Natural killer cell (primary cell): ENCODE measurements at regions of chr10 and their contacts with region 1.

Region 1: GRCh38 chr10:22714479-22715289 is at the start of gene PIP4K2A:
- DNase-seq: peak; percentile 79 to 91
- ATAC-seq: peak; percentile 78 to 91 (median 88)
- H3K4me3 ChIP-seq: peak within 1 kb of the TSS; percentile 98
- H3K4me3 Mint-ChIP-seq: peak within 1 kb of the TSS; percentile 94
- H3K27ac ChIP-seq: peak within 1 kb of the TSS; percentile 94
- H3K27ac Mint-ChIP-seq: peak within 1 kb of the TSS; percentile 82 to 87
- H3K4me1 ChIP-seq: peaks cover 14% of the 10 kb centered on the region
- H3K4me1 Mint-ChIP-seq: peaks cover 34 to 35% of the 10 kb centered on the region in 2 donors
- H3K27me3 ChIP-seq: no peaks in the 10 kb centered on the region
- H3K27me3 Mint-ChIP-seq: no peaks in the 10 kb centered on the region
- CTCF ChIP-seq: no peak
- total RNA-seq, gene PIP4K2A: 311 to 423 (median 405) TPM

Region 2: GRCh38 chr10:21336476-21337170 is 1378.1 kb before region 1 on chr10:
- intact Hi-C with region 1: no loop called
- DNase-seq: no peak
- ATAC-seq: no peak
- H3K4me3 ChIP-seq: no peak overlapping the region
- H3K4me3 Mint-ChIP-seq: no peak overlapping the region
- H3K27ac ChIP-seq: no peak overlapping the region
- H3K27ac Mint-ChIP-seq: no peak overlapping the region
- H3K4me1 ChIP-seq: no peaks in the 10 kb centered on the region
- H3K4me1 Mint-ChIP-seq: no peaks in the 10 kb centered on the region
- H3K27me3 ChIP-seq: no peaks in the 10 kb centered on the region
- H3K27me3 Mint-ChIP-seq: no peaks in the 10 kb centered on the region
- CTCF ChIP-seq: no peak

Region 3: GRCh38 chr10:22325272-22326144 is 389.2 kb before region 1 on chr10:
- intact Hi-C with region 1: loop called (anchors 10 kb)
- DNase-seq: peak; percentile 69 to 93
- ATAC-seq: peak; percentile 42 to 61 (median 60)
- H3K4me3 ChIP-seq: peak overlapping the region; percentile 49
- H3K4me3 Mint-ChIP-seq: peak overlapping the region; percentile 91
- H3K27ac ChIP-seq: peak overlapping the region; percentile 47
- H3K27ac Mint-ChIP-seq: peak overlapping the region; percentile 68 to 77
- H3K4me1 ChIP-seq: peaks cover 20% of the 10 kb centered on the region
- H3K4me1 Mint-ChIP-seq: peaks cover 35 to 43% of the 10 kb centered on the region in 2 donors
- H3K27me3 ChIP-seq: peaks cover 27% of the 10 kb centered on the region
- H3K27me3 Mint-ChIP-seq: peaks cover 13 to 30% of the 10 kb centered on the region in 2 donors
- CTCF ChIP-seq: no peak

Region 4: DNA sequence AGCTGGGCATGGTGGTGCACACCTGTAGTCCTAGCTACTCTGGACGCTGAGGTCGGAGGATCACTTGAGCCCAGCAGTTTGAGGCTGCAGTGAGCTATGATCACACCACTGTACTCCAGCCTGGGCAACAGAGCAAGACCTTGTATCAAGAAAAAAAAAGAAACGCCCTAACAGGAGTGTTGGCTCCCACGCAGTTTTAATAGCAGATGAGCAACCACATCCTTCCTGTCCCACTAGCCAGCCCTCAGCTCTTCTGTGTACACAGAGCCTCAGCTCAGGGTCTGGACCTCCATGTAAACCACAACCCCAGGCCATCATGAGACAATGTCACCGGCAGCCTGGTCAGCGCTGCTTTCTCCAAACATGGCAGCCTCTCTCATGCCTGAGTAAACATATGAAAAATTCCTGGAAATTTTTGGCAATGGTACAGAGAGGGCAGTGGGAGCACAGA is 108.5 kb before region 1 on chr10:
- intact Hi-C with region 1: loop called (anchors 5 kb)
- DNase-seq: peak; percentile 58 to 80
- ATAC-seq: peak; percentile 71 to 89 (median 86)
- H3K4me3 ChIP-seq: peak overlapping the region; percentile 1
- H3K4me3 Mint-ChIP-seq: peak overlapping the region; percentile 74
- H3K27ac ChIP-seq: peak overlapping the region; percentile 79
- H3K27ac Mint-ChIP-seq: peak overlapping the region; percentile 99
- H3K4me1 ChIP-seq: peaks cover 75% of the 10 kb centered on the region
- H3K4me1 Mint-ChIP-seq: peaks cover 87 to 97% of the 10 kb centered on the region in 2 donors
- H3K27me3 ChIP-seq: no peaks in the 10 kb centered on the region
- H3K27me3 Mint-ChIP-seq: no peaks in the 10 kb centered on the region
- CTCF ChIP-seq: no peak

Region 5: DNA sequence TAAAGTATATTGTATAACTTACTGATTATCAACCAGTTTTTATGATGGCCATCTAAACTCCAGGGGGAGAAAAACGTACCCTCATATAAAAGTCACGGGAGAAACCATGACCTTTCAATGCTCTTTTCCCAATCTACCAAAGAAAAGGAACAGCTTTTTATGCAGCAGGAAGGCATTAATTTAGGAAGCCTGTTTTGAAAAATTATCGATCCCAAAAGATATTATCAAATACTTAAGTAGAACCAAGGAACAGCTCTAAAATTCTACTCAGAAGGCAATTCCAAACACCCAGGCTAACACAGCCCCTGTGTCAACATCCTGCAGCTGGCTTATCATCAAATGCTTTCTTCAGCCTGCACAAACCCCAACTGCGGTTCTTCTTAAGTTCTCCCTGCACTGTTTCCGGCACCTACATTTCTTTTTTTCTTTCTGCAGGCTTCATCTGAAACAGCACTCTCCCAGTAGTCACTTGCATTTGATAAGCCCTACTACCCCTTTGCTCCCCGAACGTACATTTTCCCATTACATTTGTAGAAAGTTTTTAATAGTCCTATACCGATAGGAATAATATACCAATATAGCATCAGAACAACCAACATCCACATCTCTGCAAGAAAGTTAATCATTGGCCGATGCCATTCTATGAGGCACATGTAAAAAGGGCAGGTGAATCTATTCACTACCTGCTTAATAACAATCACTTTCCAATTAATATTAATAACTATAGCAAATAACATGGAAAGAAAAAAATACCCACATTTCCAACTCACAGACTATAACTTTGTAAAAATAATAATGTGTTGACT is 48.2 kb before region 1 on chr10:
- intact Hi-C with region 1: loop called (anchors 5 kb)
- DNase-seq: peak in 1 of 2 donors; percentile 91
- ATAC-seq: peak; percentile 78 to 89 (median 89)
- H3K4me3 ChIP-seq: peak overlapping the region; percentile 2
- H3K4me3 Mint-ChIP-seq: peak overlapping the region; percentile 87
- H3K27ac ChIP-seq: peak overlapping the region; percentile 38
- H3K27ac Mint-ChIP-seq: peak overlapping the region; percentile 81 to 99
- H3K4me1 ChIP-seq: peaks cover 35% of the 10 kb centered on the region
- H3K4me1 Mint-ChIP-seq: peaks cover 69 to 83% of the 10 kb centered on the region in 2 donors
- H3K27me3 ChIP-seq: no peaks in the 10 kb centered on the region
- H3K27me3 Mint-ChIP-seq: no peaks in the 10 kb centered on the region
- CTCF ChIP-seq: no peak

Region 6: DNA sequence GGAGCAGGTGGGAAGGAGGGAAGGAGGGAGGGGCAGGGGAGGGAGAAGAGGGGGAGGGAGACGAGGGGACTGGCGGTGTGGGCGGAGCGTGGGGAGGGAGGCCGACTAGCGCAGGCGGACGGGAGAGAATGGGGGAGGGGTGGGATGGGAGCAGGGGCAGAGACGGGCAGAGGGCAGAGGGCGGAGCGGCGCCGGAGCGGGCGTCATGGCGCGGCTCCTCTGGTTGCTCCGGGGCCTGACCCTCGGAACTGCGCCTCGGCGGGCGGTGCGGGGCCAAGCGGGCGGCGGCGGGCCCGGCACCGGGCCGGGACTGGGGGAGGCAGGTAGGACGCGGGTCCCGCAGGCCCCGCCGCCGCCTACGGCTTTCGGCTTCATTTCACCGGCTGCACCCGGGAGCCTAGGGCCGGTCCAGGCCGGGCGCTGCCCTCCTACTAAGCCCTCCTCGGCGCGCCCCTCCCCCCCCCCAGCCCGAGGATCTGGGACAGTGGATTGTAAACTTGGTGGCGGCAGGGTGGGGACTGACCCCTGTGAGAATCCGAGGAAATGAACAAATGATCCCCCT is 380.8 kb after region 1 on chr10 and contains the start of gene MSRB2:
- intact Hi-C with region 1: no loop called
- DNase-seq: peak; percentile 49 to 92
- ATAC-seq: peak; percentile 77 to 83 (median 79)
- H3K4me3 ChIP-seq: peak within 1 kb of the TSS; percentile 72
- H3K4me3 Mint-ChIP-seq: peak within 1 kb of the TSS; percentile 87
- H3K27ac ChIP-seq: peak within 1 kb of the TSS; percentile 69
- H3K27ac Mint-ChIP-seq: peak within 1 kb of the TSS; percentile 55 to 91
- H3K4me1 ChIP-seq: peaks cover 13% of the 10 kb centered on the region
- H3K4me1 Mint-ChIP-seq: peaks cover 16 to 34% of the 10 kb centered on the region in 2 donors
- H3K27me3 ChIP-seq: no peaks in the 10 kb centered on the region
- H3K27me3 Mint-ChIP-seq: no peaks in the 10 kb centered on the region
- CTCF ChIP-seq: no peak
- total RNA-seq, gene MSRB2: 3.3 to 5.6 (median 3.8) TPM